ENCODE measurements at regions of chr14 and their contacts with region 1.

Region 1: DNA sequence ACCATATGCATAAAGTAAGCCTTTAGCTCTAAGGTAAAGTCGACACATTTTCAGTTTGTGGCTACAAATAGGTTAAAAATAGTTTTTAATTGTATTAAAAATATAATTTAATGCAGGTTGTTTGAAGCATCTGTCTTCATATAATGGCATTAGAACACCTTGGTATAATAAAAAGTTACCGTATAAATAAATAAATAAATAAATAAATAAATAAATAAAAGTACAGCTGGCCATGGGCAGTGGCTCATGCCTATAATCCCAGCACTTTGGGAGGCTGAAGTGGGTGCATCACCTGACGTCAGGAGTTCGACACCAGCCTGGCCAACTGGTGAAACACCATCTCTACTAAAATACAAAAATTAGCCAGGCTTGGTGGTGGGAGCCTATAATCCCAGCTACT is 15.6 kb downstream of the ZFYVE26 start:
- DNase-seq: no peak
- ATAC-seq: no peak
- H3K4me3 ChIP-seq: no peak overlapping the region
- H3K27ac ChIP-seq: no peak overlapping the region
- H3K4me1 ChIP-seq: no peaks in the 10 kb centered on the region
- H3K27me3 ChIP-seq: no peaks in the 10 kb centered on the region
- CTCF ChIP-seq: no peak
- POLR2A ChIP-seq: no peak
- RAD21 ChIP-seq: no peak

Region 2: DNA sequence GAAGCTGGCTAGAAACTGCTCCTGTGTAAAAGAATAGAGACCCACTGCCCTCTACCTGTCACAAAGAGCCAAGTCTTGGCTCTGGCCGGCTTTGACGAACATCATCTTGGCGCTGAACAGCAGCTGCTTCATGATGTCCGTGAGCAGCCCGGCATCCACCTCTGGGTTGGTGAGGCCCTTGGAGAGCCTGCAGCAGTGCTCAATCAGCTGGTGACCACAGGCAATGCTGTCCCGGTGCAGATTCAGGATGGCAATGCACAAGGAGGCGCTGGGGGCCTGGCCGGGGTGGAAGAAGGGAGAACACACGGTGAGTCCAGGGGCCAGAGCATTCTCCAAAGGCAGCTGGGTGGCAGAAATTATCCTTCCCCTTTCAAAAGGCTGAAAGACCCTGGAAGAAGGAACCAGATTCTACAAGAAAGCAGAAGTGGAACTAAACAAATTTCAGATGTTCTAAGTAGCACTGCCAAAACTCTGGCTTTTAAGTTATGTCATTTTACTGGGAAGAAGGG is 34.5 kb before region 1 on chr14:
- CTCF ChIA-PET with region 1: no interaction called
- POLR2A ChIA-PET with region 1: no interaction called
- dilution Hi-C with region 1: no loop called
- in situ Hi-C with region 1: no loop called
- intact Hi-C with region 1: loop called (anchors 5 kb)
- DNase-seq: no peak
- ATAC-seq: no peak
- H3K4me3 ChIP-seq: no peak overlapping the region
- H3K27ac ChIP-seq: no peak overlapping the region
- H3K4me1 ChIP-seq: no peaks in the 10 kb centered on the region
- H3K27me3 ChIP-seq: no peaks in the 10 kb centered on the region
- CTCF ChIP-seq: no peak
- POLR2A ChIP-seq: no peak
- RAD21 ChIP-seq: no peak

Region 3: DNA sequence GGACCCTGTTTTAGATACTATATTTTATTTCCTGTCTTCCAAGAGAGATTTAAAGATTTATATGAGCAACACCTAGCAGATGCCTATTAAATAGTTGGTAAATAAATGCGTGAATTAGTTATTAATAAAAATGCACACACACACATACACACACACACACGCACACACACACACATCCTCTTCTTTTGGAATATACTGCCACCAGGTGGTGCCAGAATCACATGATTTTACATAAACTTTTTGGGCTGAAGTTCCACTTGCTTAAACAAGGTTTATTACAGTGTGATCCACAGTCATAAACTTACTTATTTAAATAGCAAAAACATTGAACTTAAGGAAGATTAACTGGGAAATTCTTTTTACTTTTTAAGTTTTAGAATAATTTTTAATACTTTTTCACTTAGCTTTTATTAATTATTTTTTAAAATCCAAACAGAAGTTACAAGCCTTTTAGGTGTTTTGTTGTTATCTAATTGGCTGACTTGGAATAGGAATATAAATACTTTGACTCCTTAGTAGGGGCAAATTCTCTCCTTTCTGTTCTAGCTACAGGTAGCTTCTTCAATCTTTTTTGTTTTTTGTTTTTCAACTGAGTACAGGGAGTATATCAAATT is 36.4 kb after region 1 on chr14:
- CTCF ChIA-PET with region 1: no interaction called
- POLR2A ChIA-PET with region 1: no interaction called
- dilution Hi-C with region 1: no loop called
- in situ Hi-C with region 1: no loop called
- intact Hi-C with region 1: no loop called
- DNase-seq: peak; percentile 88
- ATAC-seq: peak; percentile 86
- H3K4me3 ChIP-seq: no peak overlapping the region
- H3K27ac ChIP-seq: no peak overlapping the region
- H3K4me1 ChIP-seq: no peaks in the 10 kb centered on the region
- H3K27me3 ChIP-seq: no peaks in the 10 kb centered on the region
- CTCF ChIP-seq: peak; percentile 80
- POLR2A ChIP-seq: no peak
- RAD21 ChIP-seq: peak; percentile 78